GM12878 (cell line): ENCODE measurements at regions of chr12 and their contacts with region 1.

Region 1: DNA sequence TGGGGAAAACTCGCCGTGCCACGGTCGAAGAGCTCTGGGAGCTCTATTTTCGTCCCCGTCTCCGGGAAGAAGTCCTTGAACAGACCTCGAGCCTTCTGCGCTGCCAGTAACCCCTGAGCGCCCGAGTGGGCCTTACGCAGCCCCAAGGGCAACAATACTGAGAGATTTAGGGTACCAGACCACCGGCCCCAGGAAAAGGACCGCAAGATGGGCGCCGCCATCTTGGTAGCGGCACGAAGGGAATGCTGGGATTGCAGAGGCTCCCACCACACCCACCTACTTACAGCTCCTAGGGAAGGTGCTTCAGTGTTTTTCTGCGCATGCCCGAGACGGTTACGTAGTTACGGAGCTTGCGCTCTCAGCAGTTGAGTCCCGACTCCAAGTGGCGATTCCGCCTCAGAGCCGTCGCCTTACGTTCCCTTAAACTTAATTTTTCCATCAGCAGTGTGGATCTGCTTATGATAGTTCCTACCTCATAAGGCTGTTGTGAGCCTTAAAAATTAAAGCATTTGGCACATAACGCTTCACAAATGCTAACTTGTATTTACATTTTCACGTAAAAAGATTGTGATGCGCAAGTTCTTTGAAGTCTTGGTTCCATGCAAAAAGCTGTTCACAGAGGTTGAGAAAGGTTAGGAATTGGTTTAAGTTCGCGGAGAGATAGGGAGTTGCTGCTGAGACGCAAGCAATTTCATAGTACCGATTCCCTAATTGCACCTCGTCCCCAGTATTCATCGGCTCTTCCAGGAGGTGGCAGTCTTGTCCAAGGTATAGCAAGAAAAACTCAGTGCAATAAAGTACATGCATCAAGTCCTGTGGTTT is at the start of gene YARS2:
- DNase-seq: peak; percentile 92
- ATAC-seq: peak; percentile 94
- H3K4me3 ChIP-seq: peak within 1 kb of the TSS; percentile 77
- H3K27ac ChIP-seq: peak within 1 kb of the TSS; percentile 89
- H3K4me1 ChIP-seq: no peaks in the 10 kb centered on the region
- H3K27me3 ChIP-seq: no peaks in the 10 kb centered on the region
- CTCF ChIP-seq: peak; percentile 73 to 91 (median 77)
- EP300 ChIP-seq: no peak
- POLR2A ChIP-seq: peak; percentile 88
- RAD21 ChIP-seq: peak; percentile 98
- polyA plus RNA-seq, gene YARS2: 13.4 to 20.0 TPM

Region 2: DNA sequence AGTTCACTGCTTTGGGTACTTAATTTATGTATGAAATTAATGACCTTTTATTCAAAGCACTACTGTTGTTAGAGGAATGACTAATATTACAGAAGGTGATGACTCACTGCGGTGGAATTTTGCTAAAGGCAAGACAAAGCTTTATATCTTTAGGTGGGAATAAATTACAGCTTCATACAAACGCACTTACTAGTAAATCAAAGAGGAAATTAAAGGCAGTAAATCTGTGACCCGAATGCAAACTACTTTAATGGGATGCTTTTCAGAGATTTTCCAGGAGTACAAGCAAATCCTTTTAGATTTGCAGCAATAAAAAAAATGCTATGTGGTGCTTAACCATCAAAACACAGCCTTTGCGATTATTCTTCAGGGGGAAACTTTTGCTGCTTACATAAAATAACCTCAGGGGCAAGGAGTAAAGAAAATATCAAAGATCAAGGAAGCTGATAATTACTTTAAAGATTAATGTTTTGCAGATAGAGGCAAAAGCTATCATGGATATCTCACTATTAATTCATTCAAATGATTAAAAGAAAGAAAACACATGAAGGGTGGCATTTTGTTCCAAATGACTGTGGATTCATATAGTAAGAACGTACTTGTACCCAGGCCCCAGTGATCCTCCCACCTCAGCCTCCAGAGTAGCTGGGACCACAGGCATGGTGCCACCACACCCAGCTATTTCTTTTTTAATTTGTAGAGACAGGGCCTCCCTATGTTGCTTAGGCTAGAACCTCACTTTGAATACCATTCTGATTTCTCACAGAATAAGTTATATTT is 1263.9 kb before region 1 on chr12:
- CTCF ChIA-PET with region 1: no interaction called
- POLR2A ChIA-PET with region 1: no interaction called
- RAD21 ChIA-PET with region 1: no interaction called
- SMC1A ChIA-PET with region 1: no interaction called
- in situ Hi-C with region 1: no loop called
- intact Hi-C with region 1: no loop called
- DNase-seq: no peak
- ATAC-seq: no peak
- H3K4me3 ChIP-seq: no peak overlapping the region
- H3K27ac ChIP-seq: no peak overlapping the region
- H3K4me1 ChIP-seq: no peaks in the 10 kb centered on the region
- H3K27me3 ChIP-seq: no peaks in the 10 kb centered on the region
- CTCF ChIP-seq: no peak
- EP300 ChIP-seq: no peak
- POLR2A ChIP-seq: no peak
- RAD21 ChIP-seq: no peak

Region 3: GRCh38 chr12:32365473-32366064 is 390.3 kb before region 1 on chr12:
- CTCF ChIA-PET with region 1: interaction called, 27 read pairs
- POLR2A ChIA-PET with region 1: no interaction called
- RAD21 ChIA-PET with region 1: interaction called, 15 read pairs
- SMC1A ChIA-PET with region 1: interaction called, 21 read pairs
- in situ Hi-C with region 1: no loop called
- intact Hi-C with region 1: loop called (anchors 10 kb)
- DNase-seq: peak; percentile 8
- ATAC-seq: peak; percentile 86
- H3K4me3 ChIP-seq: no peak overlapping the region
- H3K27ac ChIP-seq: no peak overlapping the region
- H3K4me1 ChIP-seq: no peaks in the 10 kb centered on the region
- H3K27me3 ChIP-seq: no peaks in the 10 kb centered on the region
- CTCF ChIP-seq: peak; percentile 67 to 83 (median 67)
- EP300 ChIP-seq: no peak
- POLR2A ChIP-seq: no peak
- RAD21 ChIP-seq: peak; percentile 85

Region 4: GRCh38 chr12:32659908-32660440 is 95.9 kb before region 1 on chr12:
- CTCF ChIA-PET with region 1: interaction called, 10 read pairs
- POLR2A ChIA-PET with region 1: no interaction called
- RAD21 ChIA-PET with region 1: interaction called, 10 read pairs
- SMC1A ChIA-PET with region 1: interaction called, 5 read pairs
- in situ Hi-C with region 1: no loop called
- intact Hi-C with region 1: no loop called
- DNase-seq: no peak
- ATAC-seq: peak; percentile 37; the same call in 2 of the 3 replicates
- H3K4me3 ChIP-seq: no peak overlapping the region
- H3K27ac ChIP-seq: no peak overlapping the region
- H3K4me1 ChIP-seq: no peaks in the 10 kb centered on the region
- H3K27me3 ChIP-seq: no peaks in the 10 kb centered on the region
- CTCF ChIP-seq: no peak
- EP300 ChIP-seq: no peak
- POLR2A ChIP-seq: no peak
- RAD21 ChIP-seq: no peak

Region 5: GRCh38 chr12:32692358-32692757 is 63.5 kb before region 1 on chr12:
- CTCF ChIA-PET with region 1: interaction called, 32 read pairs
- POLR2A ChIA-PET with region 1: no interaction called
- RAD21 ChIA-PET with region 1: interaction called, 10 read pairs
- SMC1A ChIA-PET with region 1: interaction called, 3 read pairs
- in situ Hi-C with region 1: no loop called
- intact Hi-C with region 1: no loop called
- DNase-seq: no peak
- ATAC-seq: peak; percentile 42
- H3K4me3 ChIP-seq: no peak overlapping the region
- H3K27ac ChIP-seq: no peak overlapping the region
- H3K4me1 ChIP-seq: no peaks in the 10 kb centered on the region
- H3K27me3 ChIP-seq: no peaks in the 10 kb centered on the region
- CTCF ChIP-seq: no peak
- EP300 ChIP-seq: no peak
- POLR2A ChIP-seq: no peak
- RAD21 ChIP-seq: no peak

Region 6: GRCh38 chr12:32768518-32768917 is 12.7 kb after region 1 on chr12:
- CTCF ChIA-PET with region 1: interaction called, 6 read pairs
- POLR2A ChIA-PET with region 1: no interaction called
- RAD21 ChIA-PET with region 1: interaction called, 11 read pairs
- SMC1A ChIA-PET with region 1: interaction called, 23 read pairs
- in situ Hi-C with region 1: no loop called
- intact Hi-C with region 1: no loop called
- DNase-seq: no peak
- ATAC-seq: no peak
- H3K4me3 ChIP-seq: no peak overlapping the region
- H3K27ac ChIP-seq: no peak overlapping the region
- H3K4me1 ChIP-seq: no peaks in the 10 kb centered on the region
- H3K27me3 ChIP-seq: no peaks in the 10 kb centered on the region
- CTCF ChIP-seq: no peak
- EP300 ChIP-seq: no peak
- POLR2A ChIP-seq: no peak
- RAD21 ChIP-seq: no peak

Region 7: GRCh38 chr12:32906407-32907165 is 150.7 kb after region 1 on chr12:
- CTCF ChIA-PET with region 1: interaction called, 10 read pairs
- POLR2A ChIA-PET with region 1: no interaction called
- RAD21 ChIA-PET with region 1: interaction called, 4 read pairs
- SMC1A ChIA-PET with region 1: interaction called, 5 read pairs
- in situ Hi-C with region 1: loop called (anchors 5 kb)
- intact Hi-C with region 1: no loop called
- DNase-seq: peak; percentile 78
- ATAC-seq: peak; percentile 98
- H3K4me3 ChIP-seq: no peak overlapping the region
- H3K27ac ChIP-seq: peak overlapping the region; percentile 15; the same call in 1 of the 2 replicates
- H3K4me1 ChIP-seq: peaks cover 8% of the 10 kb centered on the region; the same call in 1 of the 2 replicates
- H3K27me3 ChIP-seq: no peaks in the 10 kb centered on the region; a peak in 1 of 4 replicates
- CTCF ChIP-seq: no peak
- EP300 ChIP-seq: peak; percentile 54 to 88; a peak in 3 of 4 replicates
- POLR2A ChIP-seq: no peak
- RAD21 ChIP-seq: no peak

Region 8: GRCh38 chr12:34218165-34219045 is 1462.5 kb after region 1 on chr12:
- CTCF ChIA-PET with region 1: no interaction called
- POLR2A ChIA-PET with region 1: no interaction called
- RAD21 ChIA-PET with region 1: no interaction called
- SMC1A ChIA-PET with region 1: no interaction called
- in situ Hi-C with region 1: loop called (anchors 10 kb)
- intact Hi-C with region 1: no loop called
- DNase-seq: peak; percentile 1
- ATAC-seq: peak; percentile 85
- H3K4me3 ChIP-seq: peak overlapping the region; percentile 36; the same call in 1 of the 2 replicates
- H3K27ac ChIP-seq: no peak overlapping the region
- H3K4me1 ChIP-seq: no peaks in the 10 kb centered on the region
- H3K27me3 ChIP-seq: no peaks in the 10 kb centered on the region
- CTCF ChIP-seq: peak; percentile 74 to 79 (median 78)
- EP300 ChIP-seq: no peak
- POLR2A ChIP-seq: no peak
- RAD21 ChIP-seq: peak; percentile 70